OCI-LY7 (cell line): ENCODE measurements at regions of chr19 and their contacts with region 1.

Region 1: GRCh38 chr19:43743022-43743421 is 11.7 kb downstream of the SMG9 start:
- DNase-seq: no peak
- H3K4me3 ChIP-seq: no peak overlapping the region
- H3K27ac ChIP-seq: no peak overlapping the region
- H3K4me1 ChIP-seq: peaks cover 11% of the 10 kb centered on the region
- CTCF ChIP-seq: no peak

Region 2: DNA sequence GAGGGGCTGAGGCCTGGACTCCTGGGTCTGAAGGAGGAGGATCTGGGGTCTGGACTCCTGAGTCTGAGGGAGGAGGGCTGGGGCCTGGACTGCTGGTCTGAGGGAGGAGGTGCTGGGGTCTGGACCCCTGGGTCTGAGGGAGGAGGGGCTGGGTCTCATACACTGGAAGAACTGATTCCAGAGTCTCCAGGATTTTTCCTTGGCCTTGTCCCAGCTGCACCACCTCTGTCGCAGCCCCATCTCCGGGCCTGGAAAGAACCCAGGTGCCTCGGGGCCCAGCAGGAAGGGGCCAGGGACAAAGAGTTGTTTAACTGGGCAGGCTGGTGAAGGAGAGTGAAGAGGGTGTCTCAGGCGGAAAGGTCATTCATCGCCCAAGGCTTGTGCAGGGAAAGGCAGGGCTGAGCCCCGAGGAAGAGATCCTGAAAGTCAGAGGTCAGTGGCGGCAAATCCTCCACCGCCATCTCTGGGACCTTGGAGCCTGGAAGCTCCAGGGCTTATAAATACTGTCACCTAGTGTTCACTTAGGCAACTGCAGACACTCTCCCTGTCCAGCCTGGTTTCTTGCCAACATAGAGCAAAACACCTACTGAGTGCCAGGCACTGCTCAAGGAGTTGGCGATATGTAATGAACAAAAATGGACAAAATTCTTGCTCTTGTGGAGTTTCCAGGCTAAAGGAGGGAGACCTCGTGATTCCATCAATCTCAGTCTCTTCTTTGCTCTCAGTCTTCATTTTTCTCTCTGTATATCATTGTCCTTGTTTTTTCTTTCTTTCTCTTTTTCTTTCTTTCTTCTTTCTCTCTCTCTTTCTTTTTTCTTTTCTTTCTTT is 42.2 kb after region 1 on chr19:
- CTCF ChIA-PET with region 1: interaction called, 5 read pairs
- POLR2A ChIA-PET with region 1: interaction called, 3 read pairs
- intact Hi-C with region 1: loop called (anchors 1 kb)
- DNase-seq: peak; percentile 86
- H3K4me3 ChIP-seq: peak overlapping the region; percentile 56
- H3K27ac ChIP-seq: peak overlapping the region; percentile 98
- H3K4me1 ChIP-seq: peaks cover 53% of the 10 kb centered on the region
- CTCF ChIP-seq: peak; percentile 97

Region 3: DNA sequence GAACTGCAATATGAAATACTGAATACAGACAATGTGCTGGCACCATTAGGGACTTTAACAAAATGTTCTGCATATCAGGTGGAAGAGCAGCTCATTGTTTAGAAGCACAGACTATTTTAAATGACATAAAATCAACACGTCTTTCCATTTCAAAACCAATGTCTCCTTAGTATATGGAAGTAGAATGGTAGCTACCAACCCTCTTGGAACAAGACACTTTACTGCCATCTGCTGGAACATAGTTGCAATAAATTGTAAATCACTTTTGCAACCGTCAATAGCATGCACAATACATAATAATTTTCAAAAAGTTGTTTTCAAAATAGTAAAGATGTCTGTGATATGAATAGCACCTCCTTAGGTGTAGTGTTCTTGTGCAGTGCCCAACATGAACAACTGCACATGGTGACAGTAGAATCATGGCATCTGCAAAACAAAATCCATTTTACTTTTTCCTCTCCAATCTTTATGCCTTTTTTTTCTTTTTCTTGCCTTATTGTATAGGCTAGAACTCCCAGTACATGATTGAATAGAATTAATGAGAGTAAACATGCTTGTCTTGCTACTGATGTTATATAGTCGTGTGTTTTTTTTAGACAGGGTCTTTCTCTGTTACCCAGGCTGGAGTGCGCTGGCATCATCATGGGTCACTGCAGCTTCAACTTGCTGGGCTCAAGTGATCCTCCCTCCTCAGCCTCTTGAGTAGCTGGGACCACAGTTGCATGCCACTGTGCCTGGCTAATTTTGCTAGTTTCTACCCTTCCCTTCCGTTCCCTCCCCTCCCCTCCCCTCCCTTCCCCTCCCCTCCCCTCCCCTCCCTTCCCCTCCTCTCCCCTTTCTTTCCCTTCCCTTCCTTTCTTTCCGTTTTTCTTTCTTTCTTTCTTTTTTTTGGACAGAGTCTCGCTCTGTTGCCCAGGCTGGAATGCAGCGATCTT is 67.0 kb after region 1 on chr19:
- CTCF ChIA-PET with region 1: no interaction called
- POLR2A ChIA-PET with region 1: no interaction called
- intact Hi-C with region 1: loop called (anchors 2 kb)
- DNase-seq: peak; percentile 81
- H3K4me3 ChIP-seq: no peak overlapping the region
- H3K27ac ChIP-seq: no peak overlapping the region
- H3K4me1 ChIP-seq: peaks cover 4% of the 10 kb centered on the region
- CTCF ChIP-seq: peak; percentile 94